ENCODE measurements at regions of chr11 and their contacts with region 1.

Region 1: GRCh38 chr11:20127671-20128527 is 32.4 kb downstream of the DBX1 start:
- DNase-seq: peak; percentile 84
- H3K4me3 Mint-ChIP-seq: no peak overlapping the region
- H3K27ac Mint-ChIP-seq: no peak overlapping the region
- H3K4me1 Mint-ChIP-seq: peaks cover 10% of the 10 kb centered on the region
- H3K27me3 Mint-ChIP-seq: peaks cover 41% of the 10 kb centered on the region

Region 2: GRCh38 chr11:19951558-19952115 is 176.3 kb before region 1 on chr11:
- CTCF ChIA-PET with region 1: interaction called, 25 read pairs
- DNase-seq: no peak
- H3K4me3 Mint-ChIP-seq: peak overlapping the region; percentile 32
- H3K27ac Mint-ChIP-seq: no peak overlapping the region
- H3K4me1 Mint-ChIP-seq: peaks cover 8% of the 10 kb centered on the region
- H3K27me3 Mint-ChIP-seq: peaks cover 15% of the 10 kb centered on the region

Region 3: GRCh38 chr11:20022363-20023081 is 105.4 kb before region 1 on chr11:
- CTCF ChIA-PET with region 1: no interaction called
- DNase-seq: no peak
- H3K4me3 Mint-ChIP-seq: no peak overlapping the region
- H3K27ac Mint-ChIP-seq: no peak overlapping the region
- H3K4me1 Mint-ChIP-seq: no peaks in the 10 kb centered on the region
- H3K27me3 Mint-ChIP-seq: no peaks in the 10 kb centered on the region

Region 4: GRCh38 chr11:20110908-20111669 is 16.8 kb before region 1 on chr11:
- CTCF ChIA-PET with region 1: interaction called, 33 read pairs
- DNase-seq: peak; percentile 62
- H3K4me3 Mint-ChIP-seq: no peak overlapping the region
- H3K27ac Mint-ChIP-seq: no peak overlapping the region
- H3K4me1 Mint-ChIP-seq: peaks cover 4% of the 10 kb centered on the region
- H3K27me3 Mint-ChIP-seq: peaks cover 5% of the 10 kb centered on the region

Region 5: DNA sequence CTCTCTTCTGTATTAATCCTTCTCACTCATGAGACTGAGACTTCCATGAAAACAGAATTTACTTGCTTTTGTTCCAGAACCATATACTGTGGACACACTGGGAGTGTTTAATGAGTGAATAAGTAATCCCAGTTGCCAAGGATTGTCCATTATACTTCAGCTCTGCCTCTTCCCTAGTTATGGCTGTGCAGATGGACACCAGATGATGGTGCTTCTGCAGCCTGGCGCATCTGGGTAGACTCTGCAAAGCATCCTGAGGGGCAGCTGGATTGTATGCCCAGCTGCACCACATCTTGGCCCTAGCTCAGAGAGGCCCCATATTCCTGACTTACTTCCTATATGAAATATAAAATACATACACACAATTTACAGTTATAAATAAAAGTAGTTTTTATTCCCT is 11.1 kb before region 1 on chr11:
- CTCF ChIA-PET with region 1: interaction called, 33 read pairs
- DNase-seq: no peak
- H3K4me3 Mint-ChIP-seq: no peak overlapping the region
- H3K27ac Mint-ChIP-seq: no peak overlapping the region
- H3K4me1 Mint-ChIP-seq: peaks cover 4% of the 10 kb centered on the region
- H3K27me3 Mint-ChIP-seq: peaks cover 4% of the 10 kb centered on the region

Region 6: DNA sequence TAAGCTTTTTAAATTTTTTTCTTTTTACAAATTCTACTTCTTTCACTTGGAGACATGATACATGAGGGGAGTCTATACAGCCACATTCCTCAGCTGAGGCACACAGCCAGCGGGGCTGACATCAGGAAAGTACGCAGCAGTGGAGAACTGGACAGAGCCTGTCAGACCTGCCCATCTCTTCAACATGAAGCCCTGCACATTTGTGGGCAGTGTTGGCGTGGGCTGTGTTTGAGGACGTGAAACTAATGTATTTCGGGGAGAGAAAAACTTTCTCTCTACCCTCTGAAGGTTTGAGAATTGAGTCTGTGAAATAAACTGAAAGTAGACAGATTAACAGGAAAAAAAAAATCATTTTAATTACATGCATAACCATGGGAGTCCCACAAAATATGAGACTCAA is 150.8 kb after region 1 on chr11:
- CTCF ChIA-PET with region 1: no interaction called
- DNase-seq: no peak
- H3K4me3 Mint-ChIP-seq: no peak overlapping the region
- H3K27ac Mint-ChIP-seq: no peak overlapping the region
- H3K4me1 Mint-ChIP-seq: no peaks in the 10 kb centered on the region
- H3K27me3 Mint-ChIP-seq: peaks cover 13% of the 10 kb centered on the region

Region 7: DNA sequence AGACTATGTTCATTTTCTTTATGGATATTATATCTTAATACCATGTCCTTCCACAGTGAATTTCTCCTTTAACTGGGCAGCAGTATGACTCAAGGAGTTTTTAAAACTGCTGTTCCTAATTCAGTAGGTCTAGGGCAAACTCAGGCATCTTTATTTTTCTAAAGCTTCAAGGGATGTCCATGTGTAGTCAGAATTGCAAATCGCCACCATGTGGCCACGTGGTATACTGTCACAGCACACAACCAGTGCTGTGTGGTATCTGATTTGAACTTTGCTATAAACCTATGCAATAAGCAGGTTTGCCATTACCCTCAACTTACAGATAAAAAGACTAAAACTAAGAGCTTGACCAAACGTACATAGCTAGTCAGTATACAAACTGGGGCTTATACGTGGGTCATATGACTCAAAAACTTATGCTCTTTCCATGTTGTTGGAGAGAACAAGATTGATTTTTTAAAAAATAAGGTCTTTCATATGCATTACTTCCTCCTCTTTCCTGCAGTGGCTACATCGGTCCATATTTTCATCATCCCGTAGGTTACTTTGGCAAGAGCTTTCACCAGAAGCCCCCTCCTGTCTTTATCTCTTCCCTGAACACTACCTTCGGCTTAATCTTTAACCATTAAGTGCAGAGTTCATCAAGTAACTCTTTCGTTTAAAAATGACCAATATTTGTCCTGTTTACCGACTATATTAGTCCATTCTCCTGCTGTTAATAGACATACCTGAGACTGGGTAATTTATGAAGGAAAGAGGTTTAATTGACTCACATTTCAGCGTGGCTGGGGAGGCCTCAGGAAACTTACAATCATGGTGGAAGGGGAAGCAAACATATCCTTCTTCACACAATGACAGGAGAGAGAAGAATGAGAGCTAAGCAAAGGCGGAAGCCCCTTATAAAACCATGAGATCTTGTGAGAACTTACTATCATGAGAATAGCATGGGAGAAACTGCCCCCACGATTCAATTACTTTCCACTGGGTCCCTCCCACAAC is 227.6 kb after region 1 on chr11:
- CTCF ChIA-PET with region 1: interaction called, 96 read pairs
- DNase-seq: peak; percentile 63
- H3K4me3 Mint-ChIP-seq: no peak overlapping the region
- H3K27ac Mint-ChIP-seq: no peak overlapping the region
- H3K4me1 Mint-ChIP-seq: peaks cover 13% of the 10 kb centered on the region
- H3K27me3 Mint-ChIP-seq: peaks cover 17% of the 10 kb centered on the region

Region 8: GRCh38 chr11:20609727-20610707 is 482.1 kb after region 1 on chr11:
- CTCF ChIA-PET with region 1: interaction called, 22 read pairs
- DNase-seq: peak; percentile 73
- H3K4me3 Mint-ChIP-seq: no peak overlapping the region
- H3K27ac Mint-ChIP-seq: no peak overlapping the region
- H3K4me1 Mint-ChIP-seq: peaks cover 6% of the 10 kb centered on the region
- H3K27me3 Mint-ChIP-seq: peaks cover 64% of the 10 kb centered on the region